ENCODE measurements at regions of chr15 and their contacts with region 1.

Region 1: DNA sequence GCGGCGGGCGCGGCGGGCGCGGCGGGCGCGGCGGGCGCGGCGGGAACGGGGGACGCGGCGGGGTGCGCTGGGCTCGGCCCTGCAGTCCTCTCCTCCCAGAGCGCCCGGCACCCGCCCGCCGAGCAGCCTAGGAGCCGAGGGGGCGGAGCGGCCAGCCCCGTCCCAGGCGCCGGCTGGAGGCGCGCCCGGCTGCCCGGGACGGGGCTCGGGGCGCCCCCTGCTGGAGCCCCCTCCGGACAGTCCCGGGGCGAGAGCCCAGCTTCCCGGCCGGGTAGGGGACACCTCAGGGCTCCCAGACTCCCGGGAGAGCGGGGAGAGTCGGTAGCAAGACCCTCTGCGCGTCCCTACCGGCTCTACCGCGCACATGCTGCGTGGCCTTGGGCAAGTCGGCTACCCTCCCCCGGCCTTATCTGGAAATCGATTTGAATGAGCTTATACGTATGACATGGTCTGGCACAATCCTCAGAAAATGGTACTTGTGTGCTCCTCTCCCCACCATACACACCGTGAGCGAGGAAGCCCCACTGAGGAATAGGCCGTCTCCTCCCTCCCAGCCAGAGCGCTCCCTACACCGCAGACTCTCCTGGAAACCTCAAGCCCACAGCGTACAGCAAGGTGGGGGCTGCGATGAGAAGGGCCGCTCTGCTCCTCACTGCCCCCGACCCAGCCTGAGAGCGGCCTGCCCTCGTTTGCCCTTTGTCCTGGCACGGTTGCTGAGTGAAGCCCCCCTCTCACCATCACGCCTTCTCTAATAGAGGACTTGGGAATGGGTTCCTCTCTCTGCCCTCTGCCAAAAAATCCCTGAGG is at the start of gene DAPK2:
- DNase-seq: peak; percentile 66 to 98
- ATAC-seq: peak; percentile 83 to 91
- H3K4me3 ChIP-seq: peak within 1 kb of the TSS; percentile 64
- H3K27ac ChIP-seq: peak within 1 kb of the TSS; percentile 73 to 94
- H3K4me1 ChIP-seq: peaks cover 33% of the 10 kb centered on the region
- CTCF ChIP-seq: peak; percentile 99
- EP300 ChIP-seq: no peak
- POLR2A ChIP-seq: peak; percentile 37; the same call in 1 of the 2 replicates
- RAD21 ChIP-seq: peak; percentile 63 to 95
- polyA plus RNA-seq, gene DAPK2: 4.2 and 4.8 TPM in 2 replicates

Region 2: DNA sequence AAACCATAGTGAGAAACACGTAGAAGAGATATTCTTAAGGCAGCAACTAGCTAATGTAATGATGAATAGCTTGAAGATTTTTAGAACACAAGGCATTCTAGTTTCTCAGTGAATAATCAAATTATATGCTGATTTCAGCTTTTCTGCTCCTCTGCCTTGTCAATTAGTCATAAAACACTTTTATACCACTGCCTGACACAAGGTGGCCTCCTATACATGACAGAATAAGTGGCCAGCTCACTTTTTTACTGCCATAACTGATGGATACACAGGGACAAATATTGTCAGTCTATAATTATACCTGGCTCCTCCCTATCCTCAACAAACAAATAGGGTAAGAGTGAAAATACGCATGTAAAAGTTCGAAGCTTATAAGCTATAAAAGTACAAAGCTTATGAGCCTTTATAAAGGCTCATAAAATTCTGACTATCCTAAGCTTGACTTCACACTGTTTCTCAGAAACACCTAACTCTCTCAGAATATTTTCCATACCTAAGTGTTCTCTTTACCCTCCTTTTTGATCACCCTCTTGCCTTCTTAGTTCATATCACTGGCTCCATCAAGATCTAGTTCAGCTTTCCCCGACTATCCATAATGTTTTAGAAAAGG is 294.4 kb before region 1 on chr15:
- CTCF ChIA-PET with region 1: interaction called, 40 read pairs
- POLR2A ChIA-PET with region 1: no interaction called
- DNase-seq: peak; percentile 64 to 76
- ATAC-seq: peak; percentile 93 to 97
- H3K4me3 ChIP-seq: no peak overlapping the region
- H3K27ac ChIP-seq: no peak overlapping the region
- H3K4me1 ChIP-seq: no peaks in the 10 kb centered on the region
- CTCF ChIP-seq: peak; percentile 93
- EP300 ChIP-seq: no peak
- POLR2A ChIP-seq: no peak
- RAD21 ChIP-seq: peak; percentile 92

Region 3: GRCh38 chr15:63869371-63870042 is 177.0 kb before region 1 on chr15:
- CTCF ChIA-PET with region 1: interaction called, 13 read pairs
- POLR2A ChIA-PET with region 1: no interaction called
- DNase-seq: no peak
- ATAC-seq: no peak
- H3K4me3 ChIP-seq: no peak overlapping the region
- H3K27ac ChIP-seq: no peak overlapping the region
- H3K4me1 ChIP-seq: 0 out of 3 replicates have a peak, but pooled peaks cover 4% of the 10 kb centered on the region
- CTCF ChIP-seq: no peak
- EP300 ChIP-seq: no peak
- POLR2A ChIP-seq: no peak
- RAD21 ChIP-seq: no peak

Region 4: DNA sequence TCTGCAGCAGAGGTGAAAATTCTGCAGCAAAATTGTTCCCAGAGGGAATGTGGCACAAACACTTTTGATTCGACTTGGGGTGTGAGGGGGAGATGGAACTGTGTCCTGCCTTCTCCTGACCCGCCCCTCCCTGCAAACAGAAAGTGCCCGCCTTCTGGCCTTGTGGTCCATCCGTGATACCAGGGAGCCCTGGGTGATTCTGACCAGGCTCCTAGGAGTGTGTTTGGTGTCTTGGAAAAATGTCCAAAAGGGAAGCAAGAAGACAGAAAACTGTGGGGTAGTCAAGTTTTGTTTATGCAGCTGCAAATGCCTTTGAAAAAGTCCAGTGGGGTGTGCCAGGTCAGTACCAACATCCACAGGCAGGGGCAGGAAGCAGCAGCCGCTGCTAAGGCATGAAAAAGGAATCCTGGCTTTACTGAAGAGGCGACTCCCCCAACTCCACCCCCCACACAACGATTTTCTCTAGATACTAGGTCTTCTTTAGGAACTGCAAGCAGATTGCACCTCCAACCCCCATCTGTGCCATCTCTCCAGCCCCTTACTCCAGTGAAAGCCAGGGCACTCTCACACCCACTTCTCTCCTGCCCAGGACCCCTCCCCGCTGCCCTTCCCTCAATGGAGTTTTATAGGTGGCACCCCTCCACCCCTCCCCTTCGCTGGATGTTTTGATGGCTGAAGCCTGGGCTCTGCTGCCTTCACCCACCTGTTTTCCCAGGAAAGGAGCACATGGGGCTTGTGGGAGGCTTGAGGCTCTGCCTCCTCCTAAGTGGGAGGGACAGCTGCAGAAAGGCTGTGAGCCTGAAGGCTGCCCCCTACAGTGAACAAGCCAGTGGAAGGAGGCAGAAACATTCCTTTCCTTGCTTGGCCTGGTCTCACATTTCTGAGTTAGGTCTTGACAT is 130.4 kb before region 1 on chr15:
- CTCF ChIA-PET with region 1: interaction called, 37 read pairs
- POLR2A ChIA-PET with region 1: no interaction called
- DNase-seq: peak; percentile 47 to 59
- ATAC-seq: peak; percentile 75 to 86; a peak in 5 of 6 replicates
- H3K4me3 ChIP-seq: no peak overlapping the region
- H3K27ac ChIP-seq: 0 out of 6 replicates have a peak overlapping the region, but pooled peaks of 1 of the 2 experiments have one; percentile 20
- H3K4me1 ChIP-seq: peaks cover 11% of the 10 kb centered on the region; the same call in 2 of the 3 replicates
- CTCF ChIP-seq: no peak
- EP300 ChIP-seq: no peak
- POLR2A ChIP-seq: no peak
- RAD21 ChIP-seq: no peak

Region 5: DNA sequence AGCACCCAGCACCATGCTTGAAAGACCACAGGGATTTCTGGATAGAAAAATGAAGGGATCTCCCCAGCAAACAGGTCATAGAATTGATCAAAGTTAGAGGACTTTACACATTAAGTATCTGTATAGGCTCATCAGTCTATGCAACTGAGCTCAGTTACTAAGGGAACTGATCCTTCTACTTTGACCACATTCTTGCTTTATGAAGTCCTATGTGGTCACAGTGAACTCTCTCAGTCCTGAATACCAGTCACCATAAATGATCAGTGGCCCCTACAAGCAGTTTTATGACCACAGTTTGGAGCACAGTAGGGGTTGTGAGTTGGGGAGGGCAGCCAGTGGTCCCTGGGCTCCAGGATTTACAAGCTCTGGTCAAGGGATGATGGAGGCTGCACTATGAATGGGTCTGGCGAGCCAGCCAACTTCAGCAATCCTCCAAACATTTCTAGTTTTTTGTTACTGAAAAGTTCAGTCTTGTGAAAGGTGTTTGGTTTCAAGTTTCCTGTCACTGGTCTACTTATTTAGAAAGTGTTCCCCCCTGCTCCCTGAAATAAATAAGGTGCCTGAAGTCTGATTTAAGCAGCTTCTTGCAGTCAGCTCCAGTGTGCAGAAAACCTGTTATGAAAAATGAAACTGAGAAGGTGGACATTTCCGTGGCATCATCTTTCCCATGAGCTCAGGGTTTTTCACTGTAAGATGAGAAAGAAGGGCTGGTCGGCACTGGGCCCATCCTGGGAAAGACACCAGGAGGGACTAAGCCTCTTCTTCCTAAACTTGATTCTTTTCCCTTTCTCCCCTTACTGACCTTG is 75.7 kb before region 1 on chr15:
- CTCF ChIA-PET with region 1: interaction called, 15 read pairs
- POLR2A ChIA-PET with region 1: no interaction called
- DNase-seq: no peak
- ATAC-seq: no peak
- H3K4me3 ChIP-seq: no peak overlapping the region
- H3K27ac ChIP-seq: no peak overlapping the region
- H3K4me1 ChIP-seq: peaks cover 13% of the 10 kb centered on the region; the same call in 2 of the 3 replicates
- CTCF ChIP-seq: no peak
- EP300 ChIP-seq: no peak
- POLR2A ChIP-seq: no peak
- RAD21 ChIP-seq: no peak

Region 6: GRCh38 chr15:64019764-64020163 is 26.8 kb before region 1 on chr15:
- CTCF ChIA-PET with region 1: interaction called, 43 read pairs
- POLR2A ChIA-PET with region 1: no interaction called
- DNase-seq: peak in 1 of 2 experiments; percentile 72
- ATAC-seq: peak in 1 of 2 experiments; percentile 50; a peak in 3 of 6 replicates
- H3K4me3 ChIP-seq: no peak overlapping the region
- H3K27ac ChIP-seq: no peak overlapping the region
- H3K4me1 ChIP-seq: peaks cover 50% of the 10 kb centered on the region
- CTCF ChIP-seq: no peak
- EP300 ChIP-seq: no peak
- POLR2A ChIP-seq: no peak
- RAD21 ChIP-seq: no peak

Region 7: GRCh38 chr15:64112904-64113303 is 66.4 kb after region 1 on chr15:
- CTCF ChIA-PET with region 1: no interaction called
- POLR2A ChIA-PET with region 1: no interaction called
- DNase-seq: no peak
- ATAC-seq: no peak
- H3K4me3 ChIP-seq: no peak overlapping the region
- H3K27ac ChIP-seq: no peak overlapping the region
- H3K4me1 ChIP-seq: peaks cover 4% of the 10 kb centered on the region; the same call in 1 of the 3 replicates
- CTCF ChIP-seq: no peak
- EP300 ChIP-seq: no peak
- POLR2A ChIP-seq: no peak
- RAD21 ChIP-seq: no peak

Region 8: GRCh38 chr15:64162870-64163658 is 116.5 kb after region 1 on chr15 and contains the start of gene PPIB:
- CTCF ChIA-PET with region 1: no interaction called
- POLR2A ChIA-PET with region 1: no interaction called
- DNase-seq: peak; percentile 98
- ATAC-seq: peak; percentile 96 to 97
- H3K4me3 ChIP-seq: peak within 1 kb of the TSS; percentile 80
- H3K27ac ChIP-seq: peak within 1 kb of the TSS; percentile 85 to 92
- H3K4me1 ChIP-seq: peaks cover 32% of the 10 kb centered on the region
- CTCF ChIP-seq: peak; percentile 51
- EP300 ChIP-seq: no peak; a peak in 1 of 5 replicates
- POLR2A ChIP-seq: peak; percentile 94
- RAD21 ChIP-seq: peak; percentile 78 to 83
- polyA plus RNA-seq, gene PPIB: 594 and 676 TPM in 2 replicates